Cardiac septum (tissue), 1 donor: ENCODE measurements at regions of chr7 and their contacts with region 1.

Region 1: GRCh38 chr7:726084-726853 is at the start of gene DNAAF5:
- DNase-seq: peak; percentile 92
- total RNA-seq, gene DNAAF5: 22.1 TPM

Region 2: GRCh38 chr7:650339-651031 is 75.8 kb before region 1 on chr7:
- intact Hi-C with region 1: loop called (anchors 5 kb)
- DNase-seq: peak; percentile 91

Region 3: GRCh38 chr7:913736-914516 is 187.7 kb after region 1 on chr7:
- intact Hi-C with region 1: no loop called
- DNase-seq: no peak